ENCODE measurements at regions of chr10 and their contacts with region 1.

Region 1: GRCh38 chr10:110535958-110536891 is 31.3 kb upstream of the SMC3 start:
- DNase-seq: peak; percentile 49
- H3K4me3 Mint-ChIP-seq: peak overlapping the region; percentile 48
- H3K27ac Mint-ChIP-seq: peak overlapping the region; percentile 89
- H3K4me1 Mint-ChIP-seq: peaks cover 60% of the 10 kb centered on the region
- H3K27me3 Mint-ChIP-seq: no peaks in the 10 kb centered on the region

Region 2: GRCh38 chr10:110162741-110163145 is 373.5 kb before region 1 on chr10:
- intact Hi-C with region 1: loop called (anchors 5 kb)
- DNase-seq: no peak
- H3K4me3 Mint-ChIP-seq: no peak overlapping the region
- H3K27ac Mint-ChIP-seq: no peak overlapping the region
- H3K4me1 Mint-ChIP-seq: peaks cover 29% of the 10 kb centered on the region
- H3K27me3 Mint-ChIP-seq: peaks cover 82% of the 10 kb centered on the region

Measured in activated T-helper 1 cell treated with anti-CD3 and anti-CD28 coated beads, Interleukin-12 subunit alpha, Interleukin-12 subunit beta, Interleukin-2, Interleukin-4 antibody, amounts not matched to agents 30 ng/mL and 10 ng/mL and 1 ng/mL, durations not matched to agents 14 hours and 24 hours and 36 hours (primary cell).